CD4-positive, alpha-beta T cell (primary cell): ENCODE measurements at regions of chr21 and their contacts with region 1.

Region 1: GRCh38 chr21:33641336-33642026 is at the start of gene CRYZL1:
- DNase-seq: peak; percentile 99 to 100 (median 100)
- ATAC-seq: peak; percentile 75
- H3K4me3 ChIP-seq: peak within 1 kb of the TSS; percentile 67
- H3K4me3 Mint-ChIP-seq: peak within 1 kb of the TSS; percentile 95
- H3K27ac ChIP-seq: peak within 1 kb of the TSS; percentile 75 to 81
- H3K27ac Mint-ChIP-seq: peak within 1 kb of the TSS; percentile 85
- H3K4me1 ChIP-seq: peaks cover 18% of the 10 kb centered on the region
- H3K4me1 Mint-ChIP-seq: peaks cover 40% of the 10 kb centered on the region
- H3K27me3 ChIP-seq: peaks cover 5 to 17% of the 10 kb centered on the region in 2 experiments
- H3K27me3 Mint-ChIP-seq: peaks cover 13% of the 10 kb centered on the region
- CTCF ChIP-seq: no peak
- total RNA-seq, gene CRYZL1: 28.6 to 30.5 TPM

Region 2: GRCh38 chr21:32727687-32728455 is 913.6 kb before region 1 on chr21 and contains the start of gene SYNJ1:
- CTCF ChIA-PET with region 1: no interaction called
- POLR2A ChIA-PET with region 1: no interaction called
- intact Hi-C with region 1: loop called in 1 of 2 experiments (anchors 2 kb)
- DNase-seq: peak; percentile 85 to 97 (median 92)
- ATAC-seq: peak; percentile 85
- H3K4me3 ChIP-seq: peak within 1 kb of the TSS; percentile 95
- H3K4me3 Mint-ChIP-seq: peak within 1 kb of the TSS; percentile 97
- H3K27ac ChIP-seq: peak within 1 kb of the TSS; percentile 72 to 81
- H3K27ac Mint-ChIP-seq: peak within 1 kb of the TSS; percentile 90
- H3K4me1 ChIP-seq: peaks cover 27% of the 10 kb centered on the region
- H3K4me1 Mint-ChIP-seq: peaks cover 75% of the 10 kb centered on the region
- H3K27me3 ChIP-seq: no peaks in the 10 kb centered on the region
- H3K27me3 Mint-ChIP-seq: no peaks in the 10 kb centered on the region
- CTCF ChIP-seq: no peak
- total RNA-seq, gene SYNJ1: 14.3 to 15.6 TPM

Region 3: DNA sequence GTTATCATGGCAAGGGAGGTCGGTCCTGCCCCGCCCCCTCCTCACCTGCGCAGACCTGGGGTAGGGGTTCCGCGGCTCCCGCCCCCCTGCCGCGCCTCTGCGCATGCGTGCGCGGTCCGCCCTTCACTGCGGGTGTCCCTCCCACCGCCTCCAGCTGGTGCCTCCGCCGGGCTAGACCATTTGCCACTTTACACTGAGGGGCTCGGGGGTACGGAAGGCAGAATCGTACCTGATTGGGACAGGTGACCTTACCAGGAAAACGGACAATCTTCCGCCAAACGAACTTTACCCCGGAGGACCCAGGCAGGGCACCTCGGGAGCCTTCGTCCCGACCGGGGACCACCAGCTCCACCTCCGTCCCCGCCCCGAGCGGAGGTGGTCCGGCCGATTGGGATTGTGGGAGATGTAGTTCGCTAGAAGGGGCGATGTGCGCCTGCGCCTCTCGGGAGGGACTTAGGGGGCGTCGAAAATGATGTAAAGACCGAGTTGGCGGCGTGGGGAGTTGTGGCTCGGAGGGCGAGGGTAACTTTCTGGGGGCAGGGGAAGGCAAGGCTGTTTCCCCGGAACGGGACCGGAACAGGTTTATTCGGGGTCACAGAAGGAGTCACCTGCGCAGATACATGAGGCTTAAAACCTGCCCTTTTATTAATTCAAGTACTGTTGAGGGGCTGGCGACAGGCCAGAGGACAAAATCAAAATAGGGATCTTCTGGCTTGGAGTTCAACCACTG is 149.9 kb before region 1 on chr21 and contains the start of gene DNAJC28:
- CTCF ChIA-PET with region 1: no interaction called
- POLR2A ChIA-PET with region 1: no interaction called
- intact Hi-C with region 1: loop called in 1 of 2 experiments (anchors 5 kb)
- DNase-seq: peak; percentile 89 to 96 (median 92)
- ATAC-seq: peak; percentile 96
- H3K4me3 ChIP-seq: peak within 1 kb of the TSS; percentile 73
- H3K4me3 Mint-ChIP-seq: peak within 1 kb of the TSS; percentile 94
- H3K27ac ChIP-seq: peak within 1 kb of the TSS; percentile 39 to 63
- H3K27ac Mint-ChIP-seq: peak within 1 kb of the TSS; percentile 85
- H3K4me1 ChIP-seq: peaks cover 14% of the 10 kb centered on the region
- H3K4me1 Mint-ChIP-seq: peaks cover 13% of the 10 kb centered on the region
- H3K27me3 ChIP-seq: no peaks in the 10 kb centered on the region
- H3K27me3 Mint-ChIP-seq: no peaks in the 10 kb centered on the region
- CTCF ChIP-seq: no peak
- total RNA-seq, gene DNAJC28: not detected

Region 4: GRCh38 chr21:33514229-33514628 is 127.3 kb before region 1 on chr21:
- CTCF ChIA-PET with region 1: no interaction called
- POLR2A ChIA-PET with region 1: no interaction called
- intact Hi-C with region 1: no loop called
- DNase-seq: no peak
- ATAC-seq: no peak
- H3K4me3 ChIP-seq: no peak overlapping the region
- H3K4me3 Mint-ChIP-seq: no peak overlapping the region
- H3K27ac ChIP-seq: no peak overlapping the region
- H3K27ac Mint-ChIP-seq: no peak overlapping the region
- H3K4me1 ChIP-seq: no peaks in the 10 kb centered on the region
- H3K4me1 Mint-ChIP-seq: no peaks in the 10 kb centered on the region
- H3K27me3 ChIP-seq: no peaks in the 10 kb centered on the region
- H3K27me3 Mint-ChIP-seq: no peaks in the 10 kb centered on the region
- CTCF ChIP-seq: no peak

Region 5: DNA sequence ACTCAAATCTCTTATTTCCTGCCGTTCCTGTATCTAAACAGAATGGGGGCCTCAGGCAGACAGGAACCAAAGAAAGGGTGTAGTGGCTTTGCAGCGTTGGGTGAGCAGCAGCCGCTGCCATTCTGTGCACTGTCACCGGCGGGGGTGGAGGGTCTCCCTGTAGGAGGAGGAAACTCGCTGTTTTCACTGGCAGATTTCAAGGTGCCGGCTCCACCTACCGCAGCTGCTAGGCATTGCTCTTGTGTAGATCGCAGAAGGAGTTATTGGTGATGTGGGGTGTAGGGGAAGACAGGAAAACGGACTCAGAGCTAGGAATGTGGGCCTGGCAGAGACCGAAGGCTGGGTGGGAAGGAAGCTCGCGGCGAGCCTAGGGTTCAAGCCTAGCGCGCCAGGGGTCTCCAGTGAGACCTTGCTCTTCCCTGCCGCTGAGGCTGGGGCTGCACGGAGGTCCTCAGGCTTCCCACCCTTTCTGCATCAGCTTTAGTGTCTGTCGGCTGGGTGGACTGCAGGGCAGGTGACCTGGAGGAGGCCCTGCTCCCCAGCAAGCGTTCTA is 253.3 kb after region 1 on chr21:
- CTCF ChIA-PET with region 1: no interaction called
- POLR2A ChIA-PET with region 1: no interaction called
- intact Hi-C with region 1: loop called in 1 of 2 experiments (anchors 10 kb)
- DNase-seq: peak; percentile 27 to 76 (median 54)
- ATAC-seq: peak; percentile 100
- H3K4me3 ChIP-seq: peak overlapping the region; percentile 13
- H3K4me3 Mint-ChIP-seq: peak overlapping the region; percentile 82
- H3K27ac ChIP-seq: no peak overlapping the region
- H3K27ac Mint-ChIP-seq: peak overlapping the region; percentile 76
- H3K4me1 ChIP-seq: peaks cover 7% of the 10 kb centered on the region
- H3K4me1 Mint-ChIP-seq: peaks cover 11% of the 10 kb centered on the region
- H3K27me3 ChIP-seq: no peaks in the 10 kb centered on the region
- H3K27me3 Mint-ChIP-seq: no peaks in the 10 kb centered on the region
- CTCF ChIP-seq: peak; percentile 54

Region 6: DNA sequence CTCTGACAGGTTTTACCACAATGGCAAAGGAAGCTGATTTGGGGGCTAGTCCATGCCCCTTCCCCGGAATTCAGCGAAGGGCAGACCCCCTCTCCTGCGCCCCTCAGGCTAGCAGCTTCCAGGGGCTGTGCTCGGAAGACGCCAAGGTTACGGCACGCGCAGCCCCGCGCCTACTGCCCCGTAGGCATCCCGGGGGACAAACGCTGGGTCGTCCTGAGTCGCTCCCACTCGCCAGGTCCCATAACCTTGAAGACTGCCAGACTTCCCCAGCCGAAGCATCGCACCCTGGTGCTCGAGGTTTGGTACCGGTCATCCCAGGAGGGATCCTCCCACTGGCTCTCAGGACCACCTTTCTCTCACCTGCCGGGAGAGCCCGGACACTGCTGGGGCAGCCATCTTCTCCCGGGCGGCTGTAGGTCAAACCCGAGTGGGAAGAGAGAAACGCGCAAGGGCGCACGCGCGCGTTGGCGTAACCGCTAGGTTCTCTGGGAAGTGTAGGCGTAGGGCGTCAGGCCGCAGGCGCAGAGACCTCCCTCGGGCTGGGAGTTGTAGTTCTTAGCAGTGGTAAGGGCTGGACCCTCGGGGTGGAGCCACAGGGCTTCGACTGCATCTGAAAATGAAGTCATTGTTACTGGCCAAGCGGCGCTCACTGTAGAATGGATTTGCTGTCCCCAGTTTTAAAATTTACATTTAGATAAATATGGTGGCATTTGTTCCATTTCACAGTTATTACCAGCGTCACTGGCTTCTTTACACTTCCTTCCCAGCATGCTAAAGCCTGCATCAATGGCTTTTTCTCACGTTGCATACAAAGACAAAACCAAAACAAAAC is 274.1 kb after region 1 on chr21 and contains the start of gene ATP5PO:
- CTCF ChIA-PET with region 1: no interaction called
- POLR2A ChIA-PET with region 1: no interaction called
- intact Hi-C with region 1: loop called in 1 of 2 experiments (anchors 10 kb)
- DNase-seq: peak; percentile 89 to 98 (median 94)
- ATAC-seq: peak; percentile 99
- H3K4me3 ChIP-seq: peak within 1 kb of the TSS; percentile 75
- H3K4me3 Mint-ChIP-seq: peak within 1 kb of the TSS; percentile 97
- H3K27ac ChIP-seq: peak within 1 kb of the TSS; percentile 37 to 66
- H3K27ac Mint-ChIP-seq: peak within 1 kb of the TSS; percentile 92
- H3K4me1 ChIP-seq: peaks cover 19% of the 10 kb centered on the region
- H3K4me1 Mint-ChIP-seq: peaks cover 38% of the 10 kb centered on the region
- H3K27me3 ChIP-seq: no peaks in the 10 kb centered on the region
- H3K27me3 Mint-ChIP-seq: no peaks in the 10 kb centered on the region
- CTCF ChIP-seq: no peak
- total RNA-seq, gene ATP5PO: 143 to 149 TPM

Region 7: GRCh38 chr21:34614633-34615486 is 973.4 kb after region 1 on chr21 and contains the start of gene RCAN1:
- CTCF ChIA-PET with region 1: no interaction called
- POLR2A ChIA-PET with region 1: no interaction called
- intact Hi-C with region 1: loop called in 1 of 2 experiments (anchors 5 kb)
- DNase-seq: peak; percentile 70 to 94 (median 79)
- ATAC-seq: peak; percentile 97
- H3K4me3 ChIP-seq: peak within 1 kb of the TSS; percentile 67
- H3K4me3 Mint-ChIP-seq: peak within 1 kb of the TSS; percentile 95
- H3K27ac ChIP-seq: peak within 1 kb of the TSS; percentile 55 to 61
- H3K27ac Mint-ChIP-seq: peak within 1 kb of the TSS; percentile 87
- H3K4me1 ChIP-seq: peaks cover 12% of the 10 kb centered on the region
- H3K4me1 Mint-ChIP-seq: peaks cover 30% of the 10 kb centered on the region
- H3K27me3 ChIP-seq: no peaks in the 10 kb centered on the region
- H3K27me3 Mint-ChIP-seq: no peaks in the 10 kb centered on the region
- CTCF ChIP-seq: no peak
- total RNA-seq, gene RCAN1: 1.1 to 1.5 TPM